Activated naive CD4-positive, alpha-beta T cell treated with anti-CD3 and anti-CD28 coated beads for 36 hours (primary cell): ENCODE measurements at regions of chr7 and their contacts with region 1.

Region 1: DNA sequence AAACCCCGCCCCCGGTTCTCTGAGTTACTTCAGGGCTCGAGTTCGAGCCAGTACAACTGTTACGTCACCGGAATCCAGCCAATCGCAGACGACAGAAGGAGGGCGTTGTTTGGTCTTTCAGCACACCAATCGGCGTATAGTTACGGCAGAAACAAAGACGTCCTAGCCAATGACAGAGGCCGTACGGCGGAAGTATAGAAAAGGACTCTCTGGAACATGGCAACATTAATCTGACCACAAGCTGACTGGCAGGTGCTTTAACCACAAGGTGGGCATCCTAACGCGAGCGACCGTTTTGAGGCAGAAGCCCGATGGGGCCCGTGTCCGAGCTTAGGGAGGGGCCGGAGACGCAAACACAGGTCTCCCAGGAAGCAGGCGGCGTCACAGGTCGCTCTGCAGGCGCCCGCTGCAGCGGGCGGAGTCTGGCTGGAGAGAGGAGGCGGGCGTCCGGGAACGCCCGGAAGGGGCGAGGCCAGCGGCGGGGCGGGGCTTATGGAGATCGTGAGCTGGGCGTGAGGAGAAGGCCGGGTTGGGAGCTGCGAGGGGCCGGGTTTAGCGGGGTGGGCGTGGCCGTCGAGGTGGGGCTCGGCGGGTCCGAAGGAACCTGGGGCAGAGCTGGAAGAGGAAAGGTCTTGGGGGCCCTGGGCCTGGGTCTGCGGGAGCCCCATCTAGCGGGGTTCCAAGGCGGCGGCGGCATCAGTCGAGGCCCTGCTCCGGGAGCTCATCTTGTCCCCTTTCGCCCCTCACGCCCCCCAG is at the start of gene MOSPD3:
- DNase-seq: peak; percentile 99
- H3K4me3 Mint-ChIP-seq: peak within 1 kb of the TSS; percentile 98
- H3K27ac Mint-ChIP-seq: peak within 1 kb of the TSS; percentile 99
- H3K4me1 Mint-ChIP-seq: peaks cover 13% of the 10 kb centered on the region
- H3K27me3 Mint-ChIP-seq: no peaks in the 10 kb centered on the region
- total RNA-seq, gene MOSPD3: 12.3 to 13.0 TPM

Region 2: DNA sequence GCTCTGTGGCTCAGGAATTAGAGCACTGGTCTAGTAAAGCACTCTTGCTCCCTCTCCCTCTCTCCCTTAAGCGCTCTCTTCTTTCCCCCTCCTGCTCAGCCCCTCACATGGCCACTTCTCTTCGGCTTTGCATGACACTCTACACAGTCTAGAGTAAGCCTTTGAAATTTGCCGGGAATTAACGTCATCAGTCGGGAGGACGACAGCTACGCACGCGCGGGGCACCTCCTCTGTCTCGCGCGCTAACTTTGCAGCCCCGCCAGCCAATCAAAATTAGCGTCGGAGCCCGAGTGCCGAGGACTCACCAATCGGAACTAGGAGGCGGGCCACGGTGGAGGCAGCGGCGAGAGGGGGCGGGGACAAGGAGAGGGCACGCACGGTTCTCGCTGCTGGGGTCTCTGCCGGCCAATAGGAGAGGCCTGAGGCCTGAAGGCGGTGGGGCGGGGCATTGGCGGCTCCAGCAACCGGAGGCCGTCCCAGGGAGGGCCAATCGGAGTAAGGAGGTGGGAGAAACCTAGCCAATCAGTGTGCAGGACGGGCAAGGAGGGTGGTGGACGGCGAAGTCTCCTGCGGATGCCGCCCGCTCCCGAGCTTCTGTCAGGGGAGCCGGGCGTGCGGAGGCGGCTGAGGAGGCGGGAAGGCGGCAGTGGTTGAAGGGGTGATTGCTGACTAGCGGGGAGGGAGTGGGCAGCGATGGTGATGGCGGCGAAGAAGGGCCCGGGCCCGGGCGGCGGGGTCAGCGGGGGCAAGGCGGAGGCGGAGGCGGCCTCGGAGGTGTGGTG is 73.3 kb before region 1 on chr7 and contains the start of gene AGFG2:
- CTCF ChIA-PET with region 1: no interaction called
- intact Hi-C with region 1: loop called (anchors 1 kb)
- DNase-seq: peak; percentile 100
- H3K4me3 Mint-ChIP-seq: peak within 1 kb of the TSS; percentile 97
- H3K27ac Mint-ChIP-seq: peak within 1 kb of the TSS; percentile 91
- H3K4me1 Mint-ChIP-seq: peaks cover 39% of the 10 kb centered on the region
- H3K27me3 Mint-ChIP-seq: no peaks in the 10 kb centered on the region
- total RNA-seq, gene AGFG2: 23.4 to 23.9 TPM

Region 3: DNA sequence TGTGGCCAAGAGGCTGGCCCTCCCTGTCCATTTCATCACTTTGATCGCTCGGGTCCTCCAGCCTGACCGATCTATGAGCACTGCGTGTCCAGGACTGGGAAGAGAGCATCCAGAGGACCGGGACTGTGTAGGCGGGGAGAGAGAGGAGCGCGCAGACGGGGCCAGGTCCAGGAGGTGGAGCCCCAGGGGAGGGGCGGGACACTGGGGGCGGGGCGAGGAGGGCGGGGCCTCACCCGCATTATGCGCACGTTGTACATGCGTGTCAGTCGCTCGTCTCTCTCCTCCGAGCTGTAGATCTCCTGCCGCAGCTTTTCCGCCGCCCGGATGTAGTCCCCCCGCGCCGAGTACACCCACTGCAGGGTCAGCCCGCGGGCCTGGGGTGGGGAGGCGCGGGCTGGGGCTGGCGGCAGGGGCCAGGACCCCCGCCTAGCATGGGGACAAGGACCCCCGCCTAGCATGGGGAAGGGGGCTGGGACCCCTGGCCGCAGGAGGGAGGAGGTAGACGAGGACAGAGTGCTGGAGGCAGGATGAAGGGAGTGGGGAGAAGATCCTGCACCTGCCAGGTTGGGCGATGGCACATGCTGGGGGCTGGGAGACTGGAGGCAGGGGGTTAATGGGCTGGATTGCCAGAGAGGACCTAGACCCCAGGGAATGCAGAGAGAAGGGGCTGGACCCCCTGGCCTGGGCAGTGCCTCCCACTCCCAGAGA is 14.5 kb after region 1 on chr7:
- CTCF ChIA-PET with region 1: interaction called, 16 read pairs
- intact Hi-C with region 1: loop called (anchors 1 kb)
- DNase-seq: peak; percentile 91
- H3K4me3 Mint-ChIP-seq: peak overlapping the region; percentile 66
- H3K27ac Mint-ChIP-seq: peak overlapping the region; percentile 24
- H3K4me1 Mint-ChIP-seq: peaks cover 24% of the 10 kb centered on the region
- H3K27me3 Mint-ChIP-seq: no peaks in the 10 kb centered on the region

Region 4: GRCh38 chr7:100632951-100633717 is 21.0 kb after region 1 on chr7:
- CTCF ChIA-PET with region 1: interaction called, 16 read pairs
- intact Hi-C with region 1: no loop called
- DNase-seq: peak; percentile 71
- H3K4me3 Mint-ChIP-seq: peak overlapping the region; percentile 80
- H3K27ac Mint-ChIP-seq: peak overlapping the region; percentile 76
- H3K4me1 Mint-ChIP-seq: peaks cover 22% of the 10 kb centered on the region
- H3K27me3 Mint-ChIP-seq: no peaks in the 10 kb centered on the region

Region 5: GRCh38 chr7:100673300-100673941 is 61.3 kb after region 1 on chr7 and contains the start of gene GNB2:
- CTCF ChIA-PET with region 1: no interaction called
- intact Hi-C with region 1: loop called (anchors 2 kb)
- DNase-seq: peak; percentile 100
- H3K4me3 Mint-ChIP-seq: peak within 1 kb of the TSS; percentile 97
- H3K27ac Mint-ChIP-seq: peak within 1 kb of the TSS; percentile 95
- H3K4me1 Mint-ChIP-seq: peaks cover 17% of the 10 kb centered on the region
- H3K27me3 Mint-ChIP-seq: no peaks in the 10 kb centered on the region
- total RNA-seq, gene GNB2: 221 TPM

Region 6: GRCh38 chr7:100874577-100875355 is 262.6 kb after region 1 on chr7 and contains the start of gene SRRT:
- CTCF ChIA-PET with region 1: no interaction called
- intact Hi-C with region 1: loop called (anchors 1 kb)
- DNase-seq: peak; percentile 99
- H3K4me3 Mint-ChIP-seq: peak within 1 kb of the TSS; percentile 97
- H3K27ac Mint-ChIP-seq: peak within 1 kb of the TSS; percentile 98
- H3K4me1 Mint-ChIP-seq: peaks cover 44% of the 10 kb centered on the region
- H3K27me3 Mint-ChIP-seq: no peaks in the 10 kb centered on the region
- total RNA-seq, gene SRRT: 166 to 169 TPM